T-cell (primary cell): ENCODE measurements at regions of chr12 and their contacts with region 1.

Region 1: DNA sequence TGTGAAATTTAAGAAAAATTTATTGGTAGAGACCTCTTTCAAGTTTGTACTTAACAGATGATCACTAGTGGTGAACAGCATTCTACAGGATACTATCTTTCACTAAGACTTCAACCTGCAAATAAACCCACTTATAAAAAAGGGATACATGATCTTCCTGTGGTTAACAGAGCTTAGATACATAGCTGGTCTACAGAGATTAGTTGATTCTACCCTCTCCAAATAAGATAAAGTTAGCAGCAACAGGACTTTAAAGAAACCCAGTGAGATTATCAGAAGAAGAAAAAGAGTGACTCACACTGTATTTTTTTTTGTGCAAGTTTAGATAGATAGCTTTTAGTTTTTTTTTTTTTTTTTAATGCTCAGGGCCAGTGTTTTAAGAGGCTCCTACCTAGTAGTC is 34.5 kb downstream of the USP44 start:
- DNase-seq: no peak
- ATAC-seq: no peak
- H3K4me3 ChIP-seq: no peak overlapping the region
- H3K4me3 Mint-ChIP-seq: no peak overlapping the region
- H3K27ac ChIP-seq: no peak overlapping the region
- H3K27ac Mint-ChIP-seq: peak overlapping the region in 1 of 2 donors; percentile 30
- H3K4me1 ChIP-seq: no peaks in the 10 kb centered on the region
- H3K4me1 Mint-ChIP-seq: no peaks in the 10 kb centered on the region
- H3K27me3 ChIP-seq: no peaks in the 10 kb centered on the region
- H3K27me3 Mint-ChIP-seq: no peaks in the 10 kb centered on the region

Region 2: DNA sequence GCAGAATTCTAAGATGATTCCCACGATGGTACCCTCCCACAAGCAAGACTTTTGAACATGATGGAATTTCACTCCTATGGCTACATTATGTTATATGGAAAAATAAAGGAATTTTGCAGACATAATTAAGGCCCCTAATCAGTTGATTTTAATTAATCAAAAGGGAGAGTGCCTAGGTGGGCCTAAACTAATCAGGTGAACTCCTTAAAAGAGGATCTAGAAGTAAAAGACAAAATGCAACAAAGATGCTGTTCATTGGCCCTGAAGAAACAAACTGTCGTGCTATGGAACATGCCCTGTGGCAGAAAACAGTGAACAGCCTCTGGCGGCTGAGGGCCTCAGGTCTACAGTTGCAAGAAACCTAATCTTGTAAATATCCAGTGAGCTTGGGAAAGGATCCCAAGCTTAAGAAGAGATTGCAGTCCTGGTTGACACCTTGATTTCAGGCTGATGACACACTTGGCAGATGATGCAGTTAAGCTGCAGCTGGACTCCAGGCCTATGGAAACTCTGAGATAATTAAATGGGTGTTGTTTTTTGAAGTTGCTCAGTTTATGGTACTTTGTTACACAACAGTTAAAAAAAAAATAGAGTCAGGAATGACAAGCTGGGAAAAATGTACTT is 880.2 kb before region 1 on chr12:
- CTCF ChIA-PET with region 1: no interaction called
- POLR2A ChIA-PET with region 1: interaction called in 1 of 2 experiments, 11 read pairs
- DNase-seq: no peak
- ATAC-seq: no peak
- H3K4me3 ChIP-seq: no peak overlapping the region
- H3K4me3 Mint-ChIP-seq: no peak overlapping the region
- H3K27ac ChIP-seq: no peak overlapping the region
- H3K27ac Mint-ChIP-seq: no peak overlapping the region
- H3K4me1 ChIP-seq: peaks cover 0 to 3% of the 10 kb centered on the region in 2 experiments
- H3K4me1 Mint-ChIP-seq: peaks cover 5 to 10% (median 6%) of the 10 kb centered on the region in 3 donors
- H3K27me3 ChIP-seq: no peaks in the 10 kb centered on the region
- H3K27me3 Mint-ChIP-seq: no peaks in the 10 kb centered on the region

Region 3: GRCh38 chr12:95231190-95231589 is 285.6 kb before region 1 on chr12:
- CTCF ChIA-PET with region 1: interaction called in 1 of 2 experiments, 14 read pairs
- POLR2A ChIA-PET with region 1: no interaction called
- DNase-seq: no peak
- ATAC-seq: no peak
- H3K4me3 ChIP-seq: no peak overlapping the region
- H3K4me3 Mint-ChIP-seq: no peak overlapping the region
- H3K27ac ChIP-seq: no peak overlapping the region
- H3K27ac Mint-ChIP-seq: no peak overlapping the region
- H3K4me1 ChIP-seq: no peaks in the 10 kb centered on the region
- H3K4me1 Mint-ChIP-seq: peaks cover 31 to 50% (median 39%) of the 10 kb centered on the region in 3 donors
- H3K27me3 ChIP-seq: no peaks in the 10 kb centered on the region
- H3K27me3 Mint-ChIP-seq: no peaks in the 10 kb centered on the region

Region 4: GRCh38 chr12:95494888-95495287 is 21.9 kb before region 1 on chr12:
- CTCF ChIA-PET with region 1: no interaction called
- POLR2A ChIA-PET with region 1: no interaction called
- DNase-seq: no peak
- ATAC-seq: no peak
- H3K4me3 ChIP-seq: no peak overlapping the region
- H3K4me3 Mint-ChIP-seq: no peak overlapping the region
- H3K27ac ChIP-seq: no peak overlapping the region
- H3K27ac Mint-ChIP-seq: peak overlapping the region in 1 of 2 donors; percentile 12
- H3K4me1 ChIP-seq: no peaks in the 10 kb centered on the region
- H3K4me1 Mint-ChIP-seq: peaks cover 12 to 23% (median 15%) of the 10 kb centered on the region in 3 donors
- H3K27me3 ChIP-seq: no peaks in the 10 kb centered on the region
- H3K27me3 Mint-ChIP-seq: no peaks in the 10 kb centered on the region

Region 5: DNA sequence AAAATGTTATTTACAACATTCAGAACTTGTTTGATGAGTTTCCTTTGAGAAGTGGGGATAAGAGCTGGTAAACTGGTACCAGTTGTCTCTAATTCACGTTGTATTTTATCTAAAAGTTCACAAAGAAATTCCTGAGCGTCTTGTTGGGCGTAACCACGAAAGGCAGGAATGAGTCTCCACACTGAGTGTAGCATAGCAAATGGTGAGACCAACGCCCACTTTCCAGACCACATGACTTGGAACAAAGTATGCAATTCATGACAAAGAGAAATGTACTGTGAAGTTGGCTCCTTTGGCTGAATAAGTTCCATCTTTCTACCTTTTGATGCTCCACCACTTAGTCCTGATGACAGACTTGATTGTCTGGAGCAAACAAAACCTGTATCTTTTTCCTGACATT is 16.1 kb after region 1 on chr12:
- CTCF ChIA-PET with region 1: interaction called, 4 to 10 read pairs
- POLR2A ChIA-PET with region 1: no interaction called
- DNase-seq: no peak
- ATAC-seq: no peak
- H3K4me3 ChIP-seq: no peak overlapping the region
- H3K4me3 Mint-ChIP-seq: no peak overlapping the region
- H3K27ac ChIP-seq: no peak overlapping the region
- H3K27ac Mint-ChIP-seq: no peak overlapping the region
- H3K4me1 ChIP-seq: no peaks in the 10 kb centered on the region
- H3K4me1 Mint-ChIP-seq: peaks cover 9 to 28% (median 19%) of the 10 kb centered on the region in 3 donors
- H3K27me3 ChIP-seq: no peaks in the 10 kb centered on the region
- H3K27me3 Mint-ChIP-seq: no peaks in the 10 kb centered on the region

Region 6: DNA sequence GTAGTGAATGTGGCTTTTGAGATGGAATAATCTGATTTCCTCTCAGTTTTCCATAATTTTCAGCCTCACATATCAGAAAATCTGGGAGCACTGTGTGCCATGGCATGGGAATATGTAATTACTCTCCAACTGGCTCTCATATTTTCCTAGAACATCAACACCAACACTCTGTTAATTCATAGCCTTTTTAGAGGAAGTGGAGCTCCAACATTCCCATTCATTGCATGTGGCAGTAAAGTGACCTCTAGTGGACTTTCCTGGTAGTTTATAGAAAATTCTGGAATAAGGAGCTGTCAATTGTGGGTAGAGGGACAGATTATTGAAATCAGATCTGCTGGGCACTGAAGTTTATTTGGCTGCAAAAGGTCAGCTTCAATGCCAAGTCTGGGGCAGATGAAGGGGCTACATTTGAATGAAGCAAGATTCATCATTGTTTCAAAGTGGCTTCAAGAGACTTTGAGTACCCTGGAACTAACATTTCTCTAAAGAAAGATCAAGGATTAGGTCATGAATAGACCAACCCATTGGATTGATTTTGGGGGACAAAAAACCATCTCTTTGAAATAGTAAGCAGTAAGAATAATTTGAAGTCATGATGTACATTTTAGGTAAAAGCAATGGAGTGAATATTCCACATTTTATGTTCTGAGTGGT is 58.2 kb after region 1 on chr12:
- CTCF ChIA-PET with region 1: no interaction called
- POLR2A ChIA-PET with region 1: no interaction called
- DNase-seq: no peak
- ATAC-seq: no peak
- H3K4me3 ChIP-seq: no peak overlapping the region
- H3K4me3 Mint-ChIP-seq: no peak overlapping the region
- H3K27ac ChIP-seq: no peak overlapping the region
- H3K27ac Mint-ChIP-seq: no peak overlapping the region
- H3K4me1 ChIP-seq: peaks cover 0 to 3% of the 10 kb centered on the region in 2 experiments
- H3K4me1 Mint-ChIP-seq: peaks cover 7 to 16% (median 13%) of the 10 kb centered on the region in 3 donors
- H3K27me3 ChIP-seq: peaks cover 0 to 12% of the 10 kb centered on the region in 2 experiments
- H3K27me3 Mint-ChIP-seq: peaks cover 0 to 6% of the 10 kb centered on the region in 2 donors

Region 7: GRCh38 chr12:95601091-95601961 is 84.6 kb after region 1 on chr12:
- CTCF ChIA-PET with region 1: no interaction called
- POLR2A ChIA-PET with region 1: interaction called in 1 of 2 experiments, 10 read pairs
- DNase-seq: no peak
- ATAC-seq: no peak
- H3K4me3 ChIP-seq: no peak overlapping the region
- H3K4me3 Mint-ChIP-seq: no peak overlapping the region
- H3K27ac ChIP-seq: no peak overlapping the region
- H3K27ac Mint-ChIP-seq: no peak overlapping the region
- H3K4me1 ChIP-seq: no peaks in the 10 kb centered on the region
- H3K4me1 Mint-ChIP-seq: no peaks in the 10 kb centered on the region
- H3K27me3 ChIP-seq: peaks cover 0 to 4% of the 10 kb centered on the region in 2 experiments
- H3K27me3 Mint-ChIP-seq: peaks cover 0 to 4% of the 10 kb centered on the region in 2 donors

Region 8: DNA sequence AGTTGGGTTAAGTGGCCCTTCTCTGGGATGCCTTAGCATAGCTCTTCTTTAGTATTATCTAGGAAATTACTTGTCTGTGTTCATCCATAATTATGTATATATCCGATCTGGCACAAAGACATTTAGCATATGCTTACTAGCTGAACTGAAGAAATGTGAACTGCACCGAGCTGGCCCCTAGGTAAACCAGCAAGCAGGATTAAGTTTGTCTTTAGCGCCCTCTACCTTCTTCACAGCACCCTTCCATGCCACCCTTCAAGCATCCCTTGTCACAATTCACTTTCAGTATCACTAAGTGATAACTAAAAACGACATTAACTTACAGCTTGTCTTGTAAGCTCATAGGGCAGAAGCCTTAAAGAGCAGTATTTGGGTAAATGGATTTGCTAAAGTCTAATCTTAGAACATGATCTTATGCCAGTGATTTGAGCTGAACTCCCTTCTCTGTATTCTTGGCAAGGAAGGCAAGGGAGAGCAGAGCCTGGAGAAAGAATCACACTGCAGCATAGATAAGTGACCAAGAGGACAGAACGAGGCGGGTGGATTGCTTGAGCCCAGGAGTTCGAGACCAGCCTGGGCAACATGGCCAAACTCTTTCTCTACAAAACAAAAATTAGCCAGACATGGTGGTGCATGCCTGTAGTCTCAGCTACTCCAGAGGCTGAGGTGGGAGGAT is 482.0 kb after region 1 on chr12:
- CTCF ChIA-PET with region 1: interaction called in 1 of 2 experiments, 14 read pairs
- POLR2A ChIA-PET with region 1: no interaction called
- DNase-seq: peak in 33 of 35 experiments; percentile 3 to 74 (median 32)
- ATAC-seq: peak; percentile 84 to 99 (median 93)
- H3K4me3 ChIP-seq: no peak overlapping the region
- H3K4me3 Mint-ChIP-seq: no peak overlapping the region
- H3K27ac ChIP-seq: no peak overlapping the region
- H3K27ac Mint-ChIP-seq: peak overlapping the region; percentile 1 to 56
- H3K4me1 ChIP-seq: no peaks in the 10 kb centered on the region
- H3K4me1 Mint-ChIP-seq: peaks cover 3 to 5% (median 3%) of the 10 kb centered on the region in 3 donors
- H3K27me3 ChIP-seq: no peaks in the 10 kb centered on the region
- H3K27me3 Mint-ChIP-seq: no peaks in the 10 kb centered on the region